ENCODE measurements at regions of chrX and their contacts with region 1.

Region 1: DNA sequence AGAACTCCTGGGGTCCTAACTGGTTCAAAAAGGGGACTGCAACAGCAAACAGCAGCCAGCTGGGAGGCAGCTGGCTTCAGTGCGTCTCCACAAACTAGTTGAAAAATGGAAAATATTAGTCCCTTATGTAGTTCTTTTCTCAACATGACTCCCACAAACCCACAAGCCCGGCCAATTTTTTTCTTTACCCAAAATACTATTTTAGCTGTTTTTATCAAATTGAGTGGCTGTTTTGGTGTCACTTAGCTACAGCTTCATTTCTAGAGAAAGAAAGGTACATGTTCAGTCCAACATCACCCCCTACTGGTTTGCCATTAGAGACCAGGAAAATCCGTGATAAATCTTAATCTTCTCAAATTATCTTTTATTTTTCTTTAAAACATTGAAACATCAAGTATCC is 97.2 kb downstream of the GUCY2F start:
- DNase-seq: no peak
- H3K4me3 ChIP-seq: no peak overlapping the region
- CTCF ChIP-seq: no peak
- POLR2A ChIP-seq: no peak

Region 2: GRCh38 chrX:109403927-109404326 is 19.2 kb after region 1 on chrX:
- intact Hi-C with region 1: no loop called
- DNase-seq: no peak
- H3K4me3 ChIP-seq: no peak overlapping the region
- CTCF ChIP-seq: no peak
- POLR2A ChIP-seq: no peak

Region 3: GRCh38 chrX:110032534-110033147 is 647.9 kb after region 1 on chrX:
- intact Hi-C with region 1: loop called (anchors 5 kb)
- DNase-seq: no peak
- H3K4me3 ChIP-seq: no peak overlapping the region
- CTCF ChIP-seq: no peak
- POLR2A ChIP-seq: no peak

Measured in lower leg skin (tissue), 4 donors.